Activated CD4-positive, alpha-beta T cell treated with anti-CD3 and anti-CD28 coated beads, Interleukin-2, amount 10 ng/mL, durations not matched to agents 24 days and 14 days (primary cell): ENCODE measurements at regions of chr17 and their contacts with region 1.

Region 1: GRCh38 chr17:40113110-40113906 is 8.5 kb upstream of the MSL1 start:
- DNase-seq: peak; percentile 98
- H3K4me3 Mint-ChIP-seq: peak overlapping the region; percentile 86
- H3K27ac Mint-ChIP-seq: peak overlapping the region; percentile 94
- H3K4me1 Mint-ChIP-seq: peaks cover 49% of the 10 kb centered on the region
- H3K27me3 Mint-ChIP-seq: no peaks in the 10 kb centered on the region

Region 2: DNA sequence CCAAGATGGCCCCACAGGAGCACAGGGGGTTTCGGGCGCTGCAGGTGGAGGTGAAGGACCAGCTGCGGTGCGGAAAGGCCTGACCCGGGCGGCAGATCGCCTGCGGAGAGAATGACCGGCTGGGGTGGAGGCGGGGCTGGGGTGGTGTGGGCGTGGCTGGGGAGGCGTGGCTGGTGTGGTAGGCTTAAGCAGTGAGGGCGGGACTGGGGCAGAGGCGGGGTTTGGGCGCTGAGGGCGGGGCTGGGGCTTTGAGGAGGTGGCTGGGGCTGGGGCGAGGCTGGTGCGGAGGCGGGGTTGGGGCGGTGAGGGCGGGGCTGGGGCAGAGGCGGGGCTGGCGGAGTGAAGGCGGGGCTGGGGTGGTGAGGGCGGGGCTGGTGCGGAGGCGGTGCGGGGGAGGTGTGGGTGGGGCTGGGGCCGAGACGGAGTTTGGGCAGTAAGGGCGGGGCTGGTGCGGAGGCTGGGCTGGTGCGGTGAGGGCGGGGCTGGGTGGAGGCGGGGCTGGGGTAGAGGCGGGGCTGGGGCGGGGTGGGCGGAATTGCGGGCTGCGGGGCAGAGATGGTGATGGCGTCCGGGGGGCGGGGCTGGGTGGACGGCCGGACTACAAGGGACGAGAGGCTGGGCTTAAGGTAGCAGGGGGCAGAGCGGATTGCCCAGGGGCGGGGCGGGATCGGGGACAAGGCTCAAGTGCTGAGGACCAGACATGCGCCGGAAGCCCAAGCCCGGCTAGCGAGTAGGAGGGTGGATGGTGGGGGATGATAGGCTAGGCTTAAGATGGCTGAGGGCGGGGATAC is 160.4 kb before region 1 on chr17:
- intact Hi-C with region 1: no loop called
- DNase-seq: peak; percentile 94
- H3K4me3 Mint-ChIP-seq: peak overlapping the region; percentile 86
- H3K27ac Mint-ChIP-seq: peak overlapping the region; percentile 87
- H3K4me1 Mint-ChIP-seq: peaks cover 31% of the 10 kb centered on the region
- H3K27me3 Mint-ChIP-seq: peaks cover 2% of the 10 kb centered on the region

Region 3: GRCh38 chr17:40019140-40019991 is 93.9 kb before region 1 on chr17:
- intact Hi-C with region 1: loop called (anchors 5 kb)
- DNase-seq: no peak
- H3K4me3 Mint-ChIP-seq: no peak overlapping the region
- H3K27ac Mint-ChIP-seq: no peak overlapping the region
- H3K4me1 Mint-ChIP-seq: peaks cover 1% of the 10 kb centered on the region
- H3K27me3 Mint-ChIP-seq: no peaks in the 10 kb centered on the region

Region 4: DNA sequence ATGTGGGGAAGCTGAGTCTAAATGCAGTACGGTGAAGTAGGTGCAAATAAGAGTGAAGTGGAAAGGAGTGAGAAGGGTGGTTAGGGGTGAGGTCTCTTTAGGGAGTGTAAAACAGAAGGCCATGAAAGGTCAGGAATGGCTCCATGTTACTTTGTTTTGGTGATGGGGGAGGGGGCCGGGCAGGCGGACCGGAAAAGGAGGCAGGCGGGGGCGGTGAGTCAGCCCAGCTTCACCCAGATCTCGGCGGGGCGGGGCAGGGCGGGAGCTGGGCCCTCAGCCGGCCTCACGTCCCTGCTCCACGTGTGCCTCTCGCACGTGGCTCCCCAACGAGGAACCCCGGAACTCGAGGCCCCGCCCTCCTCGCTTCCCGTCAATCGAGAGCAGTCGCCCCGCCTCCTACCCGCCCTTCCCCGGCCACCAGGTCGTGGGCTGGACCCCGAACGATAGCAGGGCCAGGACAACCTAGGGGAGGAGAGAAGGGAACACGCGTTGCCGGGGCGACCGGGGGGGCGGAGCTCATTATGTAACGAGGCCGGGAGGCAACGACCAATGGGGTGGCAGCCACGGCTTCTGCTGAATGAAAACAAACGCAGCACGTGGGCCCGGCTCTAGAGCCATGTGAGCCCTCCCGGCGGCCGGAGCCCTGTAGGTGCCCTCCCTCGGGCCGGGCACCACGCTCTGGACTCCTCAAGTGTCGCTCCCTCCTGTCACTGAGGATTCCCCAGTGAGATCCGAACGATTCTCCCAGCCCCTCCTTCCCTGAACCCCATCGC is 14.3 kb before region 1 on chr17:
- intact Hi-C with region 1: loop called (anchors 1 kb)
- DNase-seq: peak; percentile 97
- H3K4me3 Mint-ChIP-seq: peak overlapping the region; percentile 94
- H3K27ac Mint-ChIP-seq: peak overlapping the region; percentile 86
- H3K4me1 Mint-ChIP-seq: peaks cover 73% of the 10 kb centered on the region
- H3K27me3 Mint-ChIP-seq: peaks cover 4% of the 10 kb centered on the region

Region 5: DNA sequence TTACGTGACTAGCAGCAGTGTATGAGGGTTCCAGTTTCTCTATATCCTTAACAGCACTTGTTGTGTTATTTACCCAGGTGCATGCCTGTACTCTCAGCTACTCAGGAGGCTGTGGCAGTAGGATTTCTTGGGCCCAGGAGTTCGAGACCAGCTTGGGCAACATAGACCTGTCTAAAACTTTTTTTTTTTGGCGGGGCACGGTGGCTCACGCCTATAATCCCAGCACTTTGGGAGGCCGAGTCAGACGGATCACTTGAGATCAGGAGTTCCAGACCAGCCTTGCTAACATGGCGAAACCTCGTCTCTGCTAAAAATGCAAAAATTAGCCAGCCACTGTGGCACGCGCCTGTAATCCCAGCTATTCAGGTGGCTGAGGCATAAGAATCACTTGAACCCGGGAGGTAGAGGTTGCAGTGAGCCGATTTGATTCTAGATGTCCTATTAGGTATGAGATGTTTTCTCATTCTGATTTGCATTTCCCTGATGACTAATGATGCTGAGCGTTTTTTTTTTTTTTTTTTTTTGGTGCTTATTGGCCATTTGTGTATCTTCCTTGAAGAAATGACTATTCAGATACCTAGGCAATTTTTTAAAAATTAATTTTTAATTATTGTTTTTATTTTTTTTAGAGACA is 40.4 kb after region 1 on chr17:
- intact Hi-C with region 1: loop called (anchors 5 kb)
- DNase-seq: no peak
- H3K4me3 Mint-ChIP-seq: no peak overlapping the region
- H3K27ac Mint-ChIP-seq: peak overlapping the region; percentile 98
- H3K4me1 Mint-ChIP-seq: peaks cover 24% of the 10 kb centered on the region
- H3K27me3 Mint-ChIP-seq: no peaks in the 10 kb centered on the region

Region 6: GRCh38 chr17:40177275-40177874 is 64.1 kb after region 1 on chr17 and contains the start of gene RAPGEFL1:
- intact Hi-C with region 1: loop called (anchors 2 kb)
- DNase-seq: peak; percentile 93
- H3K4me3 Mint-ChIP-seq: peak within 1 kb of the TSS; percentile 66
- H3K27ac Mint-ChIP-seq: peak within 1 kb of the TSS; percentile 55
- H3K4me1 Mint-ChIP-seq: peaks cover 12% of the 10 kb centered on the region
- H3K27me3 Mint-ChIP-seq: no peaks in the 10 kb centered on the region
- total RNA-seq, gene RAPGEFL1: 11.5 and 11.9 TPM in 2 replicates

Region 7: DNA sequence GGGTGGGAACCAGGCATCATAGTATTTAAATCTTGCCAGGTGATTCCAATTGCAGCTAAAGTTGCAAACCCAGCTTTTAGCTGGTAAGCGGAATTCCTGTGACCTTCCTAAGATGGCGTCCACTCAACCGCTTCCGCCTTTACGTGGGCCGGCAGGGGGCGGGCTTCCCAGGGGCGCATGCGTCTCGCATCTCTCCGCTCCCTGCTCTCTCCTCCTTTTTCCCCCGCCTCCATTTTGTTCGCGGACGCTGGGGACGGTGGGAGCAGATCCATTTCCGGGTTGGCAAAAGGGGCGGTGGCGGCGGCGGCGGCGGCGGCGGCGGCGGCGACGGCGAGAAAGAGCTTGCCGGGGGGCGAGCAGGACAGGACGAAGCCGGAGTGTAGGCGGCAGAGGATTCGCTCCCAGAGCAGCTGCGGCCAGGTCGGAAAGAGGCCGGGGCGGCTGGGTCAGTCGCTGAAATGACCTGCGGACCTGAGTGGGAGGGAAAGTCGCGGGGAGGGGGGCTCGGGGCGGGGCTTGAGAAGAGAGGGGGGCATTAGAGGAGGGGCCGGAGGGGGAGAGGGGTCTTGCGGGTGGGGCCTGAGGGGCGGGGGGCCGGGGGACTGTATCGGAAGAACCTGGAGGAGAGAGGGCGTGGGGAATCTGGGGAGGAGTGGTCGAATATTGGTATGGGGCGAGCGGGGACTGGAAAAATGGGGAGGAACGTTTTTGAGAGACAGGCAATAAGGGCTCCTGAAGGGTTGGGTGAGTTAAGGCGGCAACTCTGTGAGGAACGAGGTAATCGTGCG is 106.0 kb after region 1 on chr17 and contains the start of gene WIPF2:
- intact Hi-C with region 1: loop called (anchors 2 kb)
- DNase-seq: peak; percentile 99
- H3K4me3 Mint-ChIP-seq: peak within 1 kb of the TSS; percentile 99
- H3K27ac Mint-ChIP-seq: peak within 1 kb of the TSS; percentile 100
- H3K4me1 Mint-ChIP-seq: peaks cover 24% of the 10 kb centered on the region
- H3K27me3 Mint-ChIP-seq: no peaks in the 10 kb centered on the region
- total RNA-seq, gene WIPF2: 19.9 and 25.5 TPM in 2 replicates

Region 8: DNA sequence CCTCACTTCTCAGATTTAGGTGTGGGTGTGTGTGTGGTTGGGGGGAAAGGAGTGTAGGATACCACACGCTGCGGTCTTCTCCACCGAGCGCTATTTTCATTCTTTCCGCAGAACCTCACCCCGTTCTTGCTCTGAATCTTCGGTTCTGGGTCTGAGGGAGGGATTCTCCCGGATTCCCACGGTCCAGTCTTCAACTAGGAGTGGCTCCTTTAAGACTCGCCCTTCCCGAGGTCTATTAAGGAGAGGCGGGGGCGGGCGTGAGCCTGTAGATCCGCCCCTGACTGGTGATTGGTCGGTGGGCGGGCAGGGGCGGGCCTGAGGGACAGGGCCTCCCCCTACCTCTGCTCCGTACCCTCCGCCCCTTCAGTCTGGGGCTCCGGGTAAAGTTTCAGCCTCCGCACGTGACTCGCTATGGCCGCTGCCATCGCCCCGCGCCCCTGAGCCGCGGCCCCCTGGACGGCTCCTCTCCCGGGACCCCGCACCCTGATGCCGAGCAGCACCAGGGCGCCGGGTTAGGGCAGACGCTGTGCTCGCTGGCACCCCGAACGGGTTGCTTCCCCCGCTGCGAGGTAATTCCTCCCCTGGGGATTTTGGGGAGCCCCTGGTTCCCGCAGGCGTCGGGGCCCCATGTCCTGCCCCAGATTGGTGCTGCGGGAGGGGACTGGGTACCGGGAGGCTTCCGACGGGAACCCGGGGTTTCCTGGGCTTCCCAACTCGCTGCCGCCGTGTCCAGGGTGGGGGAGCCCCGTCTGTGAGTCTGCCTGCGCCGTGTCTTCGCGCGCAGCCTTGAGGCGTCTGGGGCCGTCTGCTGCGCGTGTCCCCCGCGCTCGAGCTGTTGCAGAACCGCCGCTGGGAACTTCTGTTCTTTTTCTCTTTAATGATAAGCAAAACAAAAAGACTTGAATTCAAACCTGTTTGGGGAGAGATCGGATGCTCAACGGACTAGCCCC is 204.8 kb after region 1 on chr17:
- intact Hi-C with region 1: loop called (anchors 5 kb)
- DNase-seq: peak; percentile 97
- H3K4me3 Mint-ChIP-seq: peak overlapping the region; percentile 97
- H3K27ac Mint-ChIP-seq: peak overlapping the region; percentile 98
- H3K4me1 Mint-ChIP-seq: peaks cover 77% of the 10 kb centered on the region
- H3K27me3 Mint-ChIP-seq: peaks cover 4% of the 10 kb centered on the region

Region 9: GRCh38 chr17:40422990-40423616 is 309.8 kb after region 1 on chr17:
- intact Hi-C with region 1: no loop called
- DNase-seq: no peak
- H3K4me3 Mint-ChIP-seq: no peak overlapping the region
- H3K27ac Mint-ChIP-seq: no peak overlapping the region
- H3K4me1 Mint-ChIP-seq: peaks cover 45% of the 10 kb centered on the region
- H3K27me3 Mint-ChIP-seq: peaks cover 4% of the 10 kb centered on the region